PC-9 (cell line): ENCODE measurements at regions of chr3 and their contacts with region 1.

Region 1: DNA sequence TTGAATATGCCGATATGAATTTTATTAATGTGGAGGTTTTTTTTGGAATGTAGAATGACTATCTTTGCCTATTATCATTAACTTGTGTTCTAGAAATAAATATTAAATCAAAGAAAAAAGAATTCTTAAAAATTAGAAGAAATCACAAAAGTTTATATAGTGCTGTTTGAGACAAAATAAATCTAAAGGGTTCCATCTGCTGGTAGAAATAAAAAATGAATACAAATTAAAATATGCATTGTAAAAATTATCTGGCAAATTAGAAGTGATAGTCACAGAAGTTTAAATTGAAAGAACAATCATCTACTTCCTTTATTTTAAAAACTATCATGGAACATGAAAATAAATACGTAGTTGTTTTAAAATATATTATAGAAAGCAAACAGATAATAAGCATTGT is 22.7 kb upstream of the ZBTB20 start:
- DNase-seq: no peak
- H3K4me3 ChIP-seq: no peak overlapping the region
- H3K27ac ChIP-seq: no peak overlapping the region
- H3K4me1 ChIP-seq: no peaks in the 10 kb centered on the region
- H3K27me3 ChIP-seq: no peaks in the 10 kb centered on the region
- CTCF ChIP-seq: peak; percentile 57

Region 2: GRCh38 chr3:114152519-114153151 is 1017.2 kb before region 1 on chr3:
- CTCF ChIA-PET with region 1: interaction called, 5 read pairs
- POLR2A ChIA-PET with region 1: no interaction called
- intact Hi-C with region 1: loop called (anchors 10 kb)
- DNase-seq: peak; percentile 60 to 85
- H3K4me3 ChIP-seq: peak overlapping the region; percentile 61
- H3K27ac ChIP-seq: no peak overlapping the region
- H3K4me1 ChIP-seq: peaks cover 9% of the 10 kb centered on the region; the same call in 1 of the 2 replicates
- H3K27me3 ChIP-seq: no peaks in the 10 kb centered on the region
- CTCF ChIP-seq: peak; percentile 91

Region 3: GRCh38 chr3:114383875-114384557 is 785.8 kb before region 1 on chr3:
- CTCF ChIA-PET with region 1: no interaction called
- POLR2A ChIA-PET with region 1: no interaction called
- intact Hi-C with region 1: loop called (anchors 5 kb)
- DNase-seq: peak; percentile 38 to 65
- H3K4me3 ChIP-seq: no peak overlapping the region
- H3K27ac ChIP-seq: no peak overlapping the region
- H3K4me1 ChIP-seq: no peaks in the 10 kb centered on the region; the same call in 1 of the 2 replicates
- H3K27me3 ChIP-seq: no peaks in the 10 kb centered on the region
- CTCF ChIP-seq: peak; percentile 93

Region 4: GRCh38 chr3:114827495-114827894 is 342.3 kb before region 1 on chr3:
- CTCF ChIA-PET with region 1: interaction called, 16 read pairs
- POLR2A ChIA-PET with region 1: no interaction called
- intact Hi-C with region 1: no loop called
- DNase-seq: peak in 1 of 2 experiments; percentile 2
- H3K4me3 ChIP-seq: no peak overlapping the region
- H3K27ac ChIP-seq: no peak overlapping the region
- H3K4me1 ChIP-seq: no peaks in the 10 kb centered on the region
- H3K27me3 ChIP-seq: no peaks in the 10 kb centered on the region
- CTCF ChIP-seq: peak; percentile 64

Region 5: DNA sequence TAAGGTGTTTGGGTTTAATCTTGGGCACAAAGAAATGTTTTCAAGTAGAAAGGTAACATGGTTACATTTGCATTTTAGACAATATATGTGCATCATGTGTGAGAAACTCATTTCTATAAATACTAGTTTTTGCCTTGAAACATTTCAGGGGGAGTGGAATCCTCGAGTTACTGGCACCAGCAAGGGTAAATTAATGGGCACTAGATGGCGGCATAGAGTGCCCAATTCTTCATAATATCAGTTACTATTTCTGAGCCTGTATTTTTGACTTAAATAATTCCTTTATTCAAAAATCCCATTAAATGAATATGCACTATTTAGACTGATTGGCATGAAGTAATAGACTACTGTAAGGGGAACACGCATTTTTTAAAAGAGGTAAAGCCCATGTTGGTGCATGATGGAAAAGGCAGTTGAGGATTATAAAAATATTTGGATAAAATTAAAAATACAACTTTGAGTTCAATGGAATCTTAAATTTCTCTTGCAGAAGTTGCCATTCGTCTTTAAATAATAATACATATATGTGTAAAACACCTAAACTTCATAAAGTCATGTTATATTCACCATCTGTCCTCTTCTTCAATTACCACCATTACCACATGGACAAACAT is 129.0 kb before region 1 on chr3:
- CTCF ChIA-PET with region 1: no interaction called
- POLR2A ChIA-PET with region 1: no interaction called
- intact Hi-C with region 1: loop called (anchors 2 kb)
- DNase-seq: peak; percentile 23 to 35
- H3K4me3 ChIP-seq: no peak overlapping the region
- H3K27ac ChIP-seq: no peak overlapping the region
- H3K4me1 ChIP-seq: no peaks in the 10 kb centered on the region
- H3K27me3 ChIP-seq: no peaks in the 10 kb centered on the region
- CTCF ChIP-seq: peak; percentile 69

Region 6: DNA sequence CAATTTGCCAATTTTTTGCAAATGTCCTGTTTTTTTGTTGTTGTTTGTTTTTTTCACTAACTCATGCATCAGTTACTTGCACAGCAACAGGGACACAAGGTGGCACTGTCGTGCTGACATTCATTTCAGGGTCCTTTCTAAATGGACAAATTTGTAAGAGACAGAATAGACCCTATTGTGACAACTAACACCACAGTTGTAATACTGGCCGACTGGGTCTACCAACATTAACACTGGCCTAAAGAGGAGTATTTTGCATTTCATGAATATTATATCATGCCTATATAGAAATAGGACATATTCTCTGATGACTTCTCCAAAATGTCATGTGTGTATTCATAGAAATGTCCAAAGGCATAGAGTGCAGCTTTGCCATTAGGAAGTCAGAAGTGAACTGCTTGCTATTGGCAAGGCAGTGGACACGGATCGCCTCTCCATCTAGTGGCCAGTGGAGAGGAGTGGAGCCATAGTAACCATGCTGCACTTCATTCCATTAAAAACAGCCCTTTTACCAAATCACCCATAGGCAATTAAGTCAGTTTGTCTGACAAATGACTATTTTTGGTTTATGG is 77.5 kb before region 1 on chr3:
- CTCF ChIA-PET with region 1: no interaction called
- POLR2A ChIA-PET with region 1: no interaction called
- intact Hi-C with region 1: loop called (anchors 1 kb)
- DNase-seq: peak in 1 of 2 experiments; percentile 40
- H3K4me3 ChIP-seq: no peak overlapping the region
- H3K27ac ChIP-seq: no peak overlapping the region
- H3K4me1 ChIP-seq: no peaks in the 10 kb centered on the region
- H3K27me3 ChIP-seq: no peaks in the 10 kb centered on the region
- CTCF ChIP-seq: peak; percentile 75

Region 7: DNA sequence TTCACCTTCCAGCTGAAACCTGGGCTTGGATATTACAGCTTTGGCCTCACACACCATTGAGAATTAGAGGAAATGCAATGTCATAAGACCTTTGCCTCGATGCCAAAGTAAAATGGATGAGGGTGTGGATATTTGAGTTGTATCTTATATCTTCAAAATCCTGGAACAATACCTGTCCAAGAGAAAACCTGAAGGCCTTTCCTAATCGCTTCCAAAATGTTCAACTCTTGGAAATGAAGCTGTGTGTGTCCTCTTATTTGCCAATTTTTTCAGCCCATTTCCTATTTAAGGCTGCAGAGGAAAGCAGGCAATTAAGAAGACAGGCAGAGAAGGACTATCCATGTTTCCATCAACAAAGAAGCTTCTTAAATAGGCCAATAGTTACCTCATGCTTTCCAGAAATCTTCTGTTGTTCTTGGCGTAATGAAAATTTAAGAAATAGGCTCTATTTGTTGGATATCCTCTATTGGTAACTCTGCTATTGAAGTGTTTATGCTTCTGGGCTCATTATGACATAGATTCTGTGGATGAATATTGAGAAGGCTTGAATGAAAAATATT is 76.7 kb after region 1 on chr3:
- CTCF ChIA-PET with region 1: interaction called, 25 read pairs
- POLR2A ChIA-PET with region 1: no interaction called
- intact Hi-C with region 1: no loop called
- DNase-seq: no peak
- H3K4me3 ChIP-seq: no peak overlapping the region
- H3K27ac ChIP-seq: no peak overlapping the region
- H3K4me1 ChIP-seq: peaks cover 37% of the 10 kb centered on the region
- H3K27me3 ChIP-seq: no peaks in the 10 kb centered on the region
- CTCF ChIP-seq: no peak

Region 8: DNA sequence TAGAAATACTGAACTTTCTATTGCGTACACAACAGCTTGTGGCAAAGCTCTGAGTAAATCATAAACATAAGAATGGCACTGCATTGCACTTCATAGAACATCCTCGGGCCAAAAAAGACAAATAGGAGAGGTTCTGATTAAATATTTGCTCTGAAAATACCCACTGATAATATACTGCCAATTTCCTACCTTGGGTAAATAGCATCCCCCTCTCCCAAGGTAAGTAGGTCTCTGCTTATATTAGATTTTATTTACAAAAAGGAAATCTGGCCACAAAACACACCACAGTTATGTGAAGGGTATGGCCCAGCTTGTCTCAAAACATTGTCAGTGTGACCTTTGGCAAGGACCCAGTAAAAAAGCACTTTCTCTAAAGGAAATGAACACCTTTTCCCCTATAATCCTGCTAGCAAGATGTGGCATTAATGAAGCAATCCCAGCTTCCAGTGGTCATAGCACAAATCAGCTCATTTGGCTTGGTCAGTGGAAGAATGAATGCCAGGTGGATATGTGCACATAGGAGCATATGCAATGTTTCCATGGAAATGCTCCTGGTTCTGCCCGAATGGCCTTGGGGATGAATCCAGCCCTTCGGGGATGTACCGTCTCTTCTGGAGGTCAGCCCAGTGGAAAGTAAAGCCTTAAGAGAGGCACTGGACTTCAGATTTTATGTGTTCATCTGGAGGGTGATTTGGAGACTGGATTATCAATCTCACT is 959.6 kb after region 1 on chr3:
- CTCF ChIA-PET with region 1: no interaction called
- POLR2A ChIA-PET with region 1: no interaction called
- intact Hi-C with region 1: no loop called
- DNase-seq: no peak
- H3K4me3 ChIP-seq: no peak overlapping the region
- H3K27ac ChIP-seq: no peak overlapping the region
- H3K4me1 ChIP-seq: no peaks in the 10 kb centered on the region
- H3K27me3 ChIP-seq: no peaks in the 10 kb centered on the region
- CTCF ChIP-seq: no peak